AG04449 (cell line): ENCODE measurements at regions of chr1 and their contacts with region 1.

Region 1: GRCh38 chr1:33007190-33008050 is 29.3 kb downstream of the AK2 start:
- DNase-seq: peak; percentile 65
- H3K4me3 ChIP-seq: no peak overlapping the region
- CTCF ChIP-seq: peak; percentile 75

Region 2: DNA sequence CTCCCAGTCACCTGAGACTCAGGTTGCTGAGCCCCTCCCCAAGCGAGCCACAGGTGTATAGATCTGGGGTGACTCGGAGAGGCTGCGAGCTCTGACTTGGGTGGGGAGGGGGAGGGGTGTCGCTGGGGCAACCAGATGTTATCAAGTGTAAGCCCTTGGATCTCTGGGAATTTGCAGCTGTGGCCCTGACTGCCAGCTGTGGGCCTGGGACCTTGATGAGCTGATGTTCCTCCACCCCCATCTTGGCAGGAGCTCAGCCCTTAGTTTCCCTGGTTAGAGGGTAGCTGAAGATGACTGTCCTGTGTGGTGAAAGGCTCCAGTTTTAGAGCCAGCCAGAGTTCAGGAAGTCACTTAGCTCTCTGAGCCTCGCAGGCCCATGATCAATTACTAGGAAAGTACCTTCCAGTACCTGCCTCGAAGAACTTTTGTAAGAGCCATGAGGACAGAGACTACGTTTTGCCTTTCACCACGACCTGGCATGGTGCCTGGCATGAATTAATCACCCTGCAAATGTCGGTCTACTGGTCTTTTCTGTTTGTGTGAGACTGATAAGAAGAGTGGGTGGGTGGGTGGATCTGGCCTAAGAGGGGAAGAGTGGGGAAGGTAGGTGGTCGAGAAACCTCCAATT is 246.1 kb before region 1 on chr1:
- CTCF ChIA-PET with region 1: no interaction called
- POLR2A ChIA-PET with region 1: no interaction called
- DNase-seq: no peak
- H3K4me3 ChIP-seq: no peak overlapping the region
- CTCF ChIP-seq: no peak

Region 3: DNA sequence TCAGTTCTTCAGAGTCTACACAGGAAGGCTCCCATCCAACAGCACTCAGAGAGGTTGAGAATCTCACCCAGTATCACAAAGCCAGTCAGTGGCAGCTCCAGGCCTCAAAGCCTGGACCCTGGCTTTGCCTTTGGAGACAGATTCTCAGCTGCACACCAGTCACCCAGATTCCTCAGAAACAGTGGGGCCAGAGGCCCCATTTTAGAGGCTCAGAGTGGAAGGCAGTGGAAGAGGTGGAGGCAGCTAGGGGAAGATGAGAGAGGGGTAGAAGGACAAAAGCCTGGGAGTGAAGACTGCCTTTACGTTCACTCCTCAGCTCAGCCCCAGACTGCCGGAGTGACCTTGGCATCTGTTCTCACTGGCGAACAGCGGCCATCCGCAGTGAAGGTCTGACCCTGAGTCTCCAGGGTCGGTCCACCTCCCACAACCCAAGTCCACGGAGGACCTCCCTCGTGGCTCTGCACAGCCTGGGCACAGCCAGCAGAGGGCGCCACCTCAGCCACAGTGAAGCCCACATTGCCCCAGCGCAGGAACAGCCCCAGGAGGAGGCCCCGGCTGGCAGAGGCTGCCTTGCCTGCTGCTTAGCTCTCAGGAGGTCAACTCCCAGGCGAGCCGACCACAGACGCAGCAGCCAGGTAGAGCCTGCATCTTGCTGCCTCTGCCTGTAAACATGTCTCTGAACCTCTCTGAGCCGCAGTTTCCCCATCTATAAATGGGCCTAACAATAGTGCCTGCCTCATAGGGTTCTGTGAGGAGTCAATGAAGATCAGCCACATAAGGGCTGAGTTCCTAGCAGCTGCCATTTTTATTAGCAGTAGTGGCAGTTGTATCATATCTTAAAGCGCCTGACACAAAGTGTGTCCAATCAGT is 130.8 kb before region 1 on chr1:
- CTCF ChIA-PET with region 1: interaction called, 27 read pairs
- POLR2A ChIA-PET with region 1: no interaction called
- DNase-seq: no peak
- H3K4me3 ChIP-seq: no peak overlapping the region
- CTCF ChIP-seq: peak; percentile 95

Region 4: DNA sequence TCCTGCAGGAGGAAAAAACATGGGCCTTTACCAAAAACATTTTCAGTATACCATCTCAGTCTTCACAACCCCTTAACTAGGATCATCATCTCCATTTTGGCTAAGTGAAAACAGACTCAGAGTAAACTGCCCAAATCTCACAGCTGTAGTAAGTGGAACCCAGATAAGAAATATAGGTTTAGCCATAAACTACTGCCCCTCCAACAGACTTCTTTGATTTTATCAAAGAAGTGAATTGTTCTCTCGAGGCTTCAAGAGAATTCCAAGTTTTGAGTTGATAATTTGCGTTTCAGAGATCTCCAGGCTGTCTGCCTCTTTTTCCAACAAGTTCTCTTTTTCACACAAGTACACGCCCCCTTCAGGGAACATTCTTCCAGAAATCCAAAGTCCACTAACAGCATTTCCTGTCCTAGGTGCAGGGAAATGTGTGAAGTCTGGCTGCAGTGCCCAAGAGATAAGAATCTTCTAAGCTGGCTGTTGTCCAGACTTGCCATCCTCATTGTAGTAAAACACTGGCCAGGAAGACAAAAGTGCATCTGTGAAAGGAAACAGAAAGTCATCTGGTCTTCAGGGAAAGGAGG is 73.6 kb before region 1 on chr1:
- CTCF ChIA-PET with region 1: interaction called, 277 read pairs
- POLR2A ChIA-PET with region 1: no interaction called
- DNase-seq: no peak
- H3K4me3 ChIP-seq: no peak overlapping the region
- CTCF ChIP-seq: no peak

Region 5: DNA sequence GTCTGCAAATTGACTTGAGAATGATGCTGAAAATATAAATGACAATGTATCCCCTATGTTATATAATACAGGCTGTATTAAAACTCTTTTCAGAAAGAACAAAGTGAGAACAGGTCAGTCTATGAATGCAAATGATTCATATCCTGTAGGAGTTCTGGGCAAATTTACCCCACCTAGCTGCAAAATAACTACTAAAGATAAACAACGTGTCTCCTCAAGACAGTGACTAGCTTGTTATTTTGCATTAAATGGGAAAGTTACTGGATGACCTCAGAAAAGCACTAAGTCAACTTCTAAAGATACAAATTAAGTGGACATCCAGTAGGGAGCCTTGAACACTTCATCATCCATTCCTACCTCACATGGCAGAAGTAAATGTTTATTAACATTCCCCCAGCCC is 53.9 kb before region 1 on chr1:
- CTCF ChIA-PET with region 1: interaction called, 10 read pairs
- POLR2A ChIA-PET with region 1: no interaction called
- DNase-seq: no peak
- H3K4me3 ChIP-seq: no peak overlapping the region
- CTCF ChIP-seq: no peak

Region 6: GRCh38 chr1:32992489-32993323 is 14.7 kb before region 1 on chr1:
- CTCF ChIA-PET with region 1: interaction called, 44 read pairs
- POLR2A ChIA-PET with region 1: no interaction called
- DNase-seq: peak; percentile 95
- H3K4me3 ChIP-seq: no peak overlapping the region
- CTCF ChIP-seq: no peak

Region 7: DNA sequence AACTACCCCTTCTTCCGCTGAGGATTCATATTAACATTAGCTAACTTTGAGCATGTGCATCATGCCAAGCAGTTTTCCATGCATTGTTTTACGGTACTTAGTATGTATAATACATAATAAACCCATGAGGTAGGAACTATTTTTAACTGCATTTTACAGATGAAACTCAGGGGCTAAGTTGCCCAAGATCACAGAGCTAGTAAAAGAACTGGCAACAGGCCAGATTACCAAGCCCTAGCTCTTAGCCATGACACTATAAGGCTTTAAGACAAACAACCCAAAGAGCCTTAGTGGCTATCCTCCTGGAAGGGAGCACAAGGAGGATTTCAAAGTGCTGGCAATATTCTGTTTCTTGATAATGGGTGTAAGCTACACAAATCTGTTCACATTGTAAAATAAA is 23.2 kb after region 1 on chr1:
- CTCF ChIA-PET with region 1: interaction called, 15 read pairs
- POLR2A ChIA-PET with region 1: no interaction called
- DNase-seq: no peak
- H3K4me3 ChIP-seq: no peak overlapping the region
- CTCF ChIP-seq: no peak